ENCODE measurements at regions of chr4 and their contacts with region 1.

Region 1: GRCh38 chr4:39146211-39146610 is 36.1 kb upstream of the WDR19 start:
- DNase-seq: no peak
- H3K4me3 ChIP-seq: no peak overlapping the region
- H3K27ac ChIP-seq: no peak overlapping the region
- H3K4me1 ChIP-seq: peaks cover 5% of the 10 kb centered on the region
- H3K27me3 ChIP-seq: no peaks in the 10 kb centered on the region
- CTCF ChIP-seq: no peak

Region 2: GRCh38 chr4:38641811-38642210 is 504.4 kb before region 1 on chr4:
- CTCF ChIA-PET with region 1: no interaction called
- POLR2A ChIA-PET with region 1: interaction called, 13 read pairs
- intact Hi-C with region 1: no loop called
- DNase-seq: no peak
- H3K4me3 ChIP-seq: no peak overlapping the region
- H3K27ac ChIP-seq: no peak overlapping the region
- H3K4me1 ChIP-seq: no peaks in the 10 kb centered on the region
- H3K27me3 ChIP-seq: no peaks in the 10 kb centered on the region
- CTCF ChIP-seq: no peak

Region 3: GRCh38 chr4:39062094-39062769 is 84.0 kb before region 1 on chr4 and contains the start of gene KLHL5:
- CTCF ChIA-PET with region 1: no interaction called
- POLR2A ChIA-PET with region 1: no interaction called
- intact Hi-C with region 1: no loop called
- DNase-seq: no peak
- H3K4me3 ChIP-seq: no peak within 1 kb of the TSS
- H3K27ac ChIP-seq: no peak within 1 kb of the TSS
- H3K4me1 ChIP-seq: no peaks in the 10 kb centered on the region
- H3K27me3 ChIP-seq: no peaks in the 10 kb centered on the region
- CTCF ChIP-seq: no peak
- total RNA-seq, gene KLHL5: 21.6 and 29.3 TPM in 2 replicates